ENCODE measurements at regions of chr12 and their contacts with region 1.

Region 1: DNA sequence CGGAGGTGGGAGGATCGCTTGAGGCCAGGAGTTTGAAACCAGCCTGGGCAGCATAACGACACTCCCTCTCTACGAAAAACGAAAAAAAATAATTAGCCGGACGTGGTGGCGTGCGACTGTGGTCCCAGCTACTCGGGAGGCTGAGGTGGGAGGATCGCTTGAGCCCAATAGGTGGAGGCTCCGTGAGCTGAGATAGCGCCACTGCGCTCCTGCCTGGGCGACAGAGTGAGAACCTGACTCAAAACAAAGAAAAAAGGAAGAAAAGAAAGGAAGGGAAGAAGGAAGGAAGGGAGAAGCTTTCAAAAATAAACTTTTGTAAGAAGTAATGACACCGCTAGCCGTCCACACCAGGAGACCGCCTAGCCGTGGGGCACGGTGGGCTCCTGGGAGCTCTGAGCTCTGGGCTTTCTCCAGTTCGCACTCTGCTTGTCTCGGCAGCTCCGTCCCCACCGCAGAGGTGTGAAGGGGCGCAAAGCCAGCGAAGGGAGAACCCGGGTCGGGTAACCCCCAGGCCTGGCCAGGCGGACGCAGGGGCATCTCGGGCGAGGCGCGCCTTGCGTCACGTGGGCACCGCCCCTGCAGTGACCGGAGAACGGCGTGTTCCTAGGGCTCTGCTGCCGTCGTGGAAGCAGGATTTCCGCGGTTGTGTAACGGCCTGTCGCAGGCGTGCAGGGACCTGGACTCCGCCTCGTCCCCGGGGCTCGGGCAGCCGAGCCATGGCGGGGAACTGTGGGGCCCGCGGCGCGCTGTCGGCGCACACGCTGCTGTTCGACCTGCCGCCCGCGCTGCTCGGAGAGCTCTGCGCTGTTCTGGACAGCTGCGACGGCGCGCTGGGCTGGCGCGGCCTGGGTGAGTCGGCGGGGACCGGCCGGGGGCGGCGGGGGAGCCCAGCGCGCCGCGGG is at the start of gene IRAK3:
- DNase-seq: peak in 8 of 9 donors; percentile 15 to 44 (median 22)
- ATAC-seq: peak; percentile 86
- H3K4me3 ChIP-seq: peak within 1 kb of the TSS; percentile 49
- H3K4me3 Mint-ChIP-seq: peak within 1 kb of the TSS; percentile 72 to 88 (median 82)
- H3K27ac ChIP-seq: no peak within 1 kb of the TSS
- H3K27ac Mint-ChIP-seq: peak within 1 kb of the TSS in 2 of 9 donors; percentile 7 to 29
- H3K4me1 ChIP-seq: peaks cover 0 to 5% of the 10 kb centered on the region in 2 donors
- H3K4me1 Mint-ChIP-seq: peaks cover 0 to 24% (median 8%) of the 10 kb centered on the region in 7 donors
- H3K27me3 ChIP-seq: peaks cover 9% of the 10 kb centered on the region in 2 donors
- H3K27me3 Mint-ChIP-seq: peaks cover 54 to 75% (median 59%) of the 10 kb centered on the region in 5 donors
- total RNA-seq, gene IRAK3: 0.19 to 28.8 (median 1.9) TPM

Region 2: DNA sequence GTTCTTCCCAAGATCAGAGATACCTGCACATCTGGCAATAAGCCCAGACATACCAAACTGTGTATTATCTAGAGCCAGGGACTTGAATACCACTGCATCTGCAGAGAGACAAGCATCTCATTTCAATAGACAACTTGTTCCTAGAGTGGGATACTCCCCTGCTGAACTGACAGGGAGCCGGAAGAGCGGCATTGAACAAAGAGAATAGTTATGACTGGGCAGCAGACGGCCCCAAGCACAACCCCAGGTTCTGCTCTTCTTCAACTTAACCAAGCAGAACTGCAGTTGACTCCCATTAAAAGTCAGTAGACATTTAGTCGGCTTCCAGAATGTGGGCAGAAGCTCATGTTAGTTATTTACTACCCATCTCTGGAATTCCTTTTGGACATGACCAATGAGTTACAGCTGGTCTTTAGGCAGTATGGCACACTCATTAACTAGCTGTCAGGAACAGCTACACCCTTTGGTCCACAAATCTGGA is 251.6 kb before region 1 on chr12:
- CTCF ChIA-PET with region 1: no interaction called
- POLR2A ChIA-PET with region 1: no interaction called
- intact Hi-C with region 1: no loop called
- DNase-seq: no peak
- ATAC-seq: no peak
- H3K4me3 ChIP-seq: no peak overlapping the region
- H3K4me3 Mint-ChIP-seq: no peak overlapping the region
- H3K27ac ChIP-seq: no peak overlapping the region
- H3K27ac Mint-ChIP-seq: no peak overlapping the region
- H3K4me1 ChIP-seq: no peaks in the 10 kb centered on the region
- H3K4me1 Mint-ChIP-seq: no peaks in the 10 kb centered on the region
- H3K27me3 ChIP-seq: no peaks in the 10 kb centered on the region
- H3K27me3 Mint-ChIP-seq: peaks cover 12 to 30% (median 13%) of the 10 kb centered on the region in 5 donors

Region 3: DNA sequence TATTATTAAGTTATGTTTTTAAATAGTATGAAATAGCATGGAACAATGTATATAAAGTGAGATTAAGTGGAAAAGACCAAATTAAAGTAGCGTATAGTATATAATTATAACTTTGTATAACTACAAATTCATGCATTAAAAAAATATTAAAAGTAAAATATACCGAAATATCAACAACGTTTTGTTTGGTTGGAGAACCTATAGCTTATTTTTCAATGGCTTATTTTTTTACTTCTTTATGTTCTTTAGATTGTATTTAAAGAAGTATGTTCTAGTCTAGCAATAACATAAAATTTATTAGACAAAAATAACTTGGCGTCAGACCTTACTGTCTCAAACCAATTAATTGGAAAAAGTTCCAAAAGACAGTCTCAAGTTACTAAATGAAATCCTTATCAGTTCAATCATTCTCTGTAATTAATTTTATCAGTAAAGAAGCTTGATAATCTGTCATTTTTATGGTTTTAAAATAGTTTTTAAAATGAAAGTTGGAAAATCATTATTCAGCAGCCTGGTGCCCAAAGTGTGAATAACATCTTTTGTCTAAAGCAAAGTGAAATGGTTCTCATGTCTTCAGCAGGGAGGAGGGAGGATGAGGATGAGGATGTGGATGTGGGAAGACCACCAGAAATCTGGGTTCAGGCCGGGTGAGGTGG is 46.9 kb after region 1 on chr12:
- CTCF ChIA-PET with region 1: interaction called, 3 read pairs
- POLR2A ChIA-PET with region 1: no interaction called
- intact Hi-C with region 1: loop called in 1 of 2 experiments (anchors 5 kb)
- DNase-seq: no peak
- ATAC-seq: no peak
- H3K4me3 ChIP-seq: no peak overlapping the region
- H3K4me3 Mint-ChIP-seq: peak overlapping the region in 9 of 10 donors; percentile 37 to 74 (median 53)
- H3K27ac ChIP-seq: no peak overlapping the region
- H3K27ac Mint-ChIP-seq: no peak overlapping the region
- H3K4me1 ChIP-seq: no peaks in the 10 kb centered on the region
- H3K4me1 Mint-ChIP-seq: peaks cover 0 to 9% (median 4%) of the 10 kb centered on the region in 7 donors
- H3K27me3 ChIP-seq: peaks cover 0 to 6% of the 10 kb centered on the region in 2 donors
- H3K27me3 Mint-ChIP-seq: peaks cover 29 to 55% (median 33%) of the 10 kb centered on the region in 5 donors

Region 4: GRCh38 chr12:66624806-66625205 is 436.0 kb after region 1 on chr12:
- CTCF ChIA-PET with region 1: no interaction called
- POLR2A ChIA-PET with region 1: no interaction called
- intact Hi-C with region 1: no loop called
- DNase-seq: no peak
- ATAC-seq: no peak
- H3K4me3 ChIP-seq: no peak overlapping the region
- H3K4me3 Mint-ChIP-seq: no peak overlapping the region
- H3K27ac ChIP-seq: no peak overlapping the region
- H3K27ac Mint-ChIP-seq: no peak overlapping the region
- H3K4me1 ChIP-seq: no peaks in the 10 kb centered on the region
- H3K4me1 Mint-ChIP-seq: peaks cover 0 to 1% (median 0%) of the 10 kb centered on the region in 7 donors
- H3K27me3 ChIP-seq: no peaks in the 10 kb centered on the region
- H3K27me3 Mint-ChIP-seq: peaks cover 0 to 8% (median 0%) of the 10 kb centered on the region in 5 donors

Measured in naive thymus-derived CD4-positive, alpha-beta T cell (primary cell).